ENCODE measurements at regions of chr1 and their contacts with region 1.

Region 1: DNA sequence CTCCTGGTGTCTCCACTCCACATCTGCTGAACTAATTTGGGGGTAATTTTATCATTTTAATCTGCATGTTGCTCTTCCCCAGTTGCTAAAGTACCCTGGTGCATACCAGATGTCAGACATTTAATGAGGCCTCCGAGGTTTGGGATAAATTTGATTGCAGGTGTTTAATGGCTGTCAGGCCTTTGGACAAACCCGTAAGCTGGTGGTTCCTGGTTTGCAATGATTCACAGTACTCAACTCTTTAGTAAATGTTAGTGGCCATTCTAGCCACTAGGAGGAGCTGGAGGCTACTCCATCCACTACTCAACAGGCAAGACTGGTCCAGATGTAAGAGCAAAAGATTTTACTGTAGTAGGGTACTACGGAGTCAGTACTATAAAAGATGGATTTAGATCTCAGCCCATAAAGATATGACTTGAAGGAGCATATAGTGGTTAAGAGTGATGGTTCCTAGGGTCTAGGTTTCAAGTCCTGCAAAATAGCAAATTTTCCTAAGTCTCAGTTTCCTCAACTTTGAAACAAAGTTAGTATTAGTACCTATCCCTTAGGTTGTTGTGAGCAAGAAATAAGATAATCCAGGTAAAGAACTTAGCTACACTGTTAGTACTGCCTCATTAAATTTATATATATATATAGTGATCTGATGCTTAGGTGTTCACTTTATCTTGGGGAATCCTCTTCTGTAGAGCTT is 132.8 kb downstream of the SNX7 start:
- DNase-seq: peak; percentile 75
- H3K4me3 ChIP-seq: no peak overlapping the region
- H3K27ac ChIP-seq: no peak overlapping the region
- H3K4me1 ChIP-seq: no peaks in the 10 kb centered on the region
- H3K27me3 ChIP-seq: no peaks in the 10 kb centered on the region

Region 2: GRCh38 chr1:98371764-98372163 is 422.6 kb before region 1 on chr1:
- in situ Hi-C with region 1: no loop called
- DNase-seq: no peak
- H3K4me3 ChIP-seq: no peak overlapping the region
- H3K27ac ChIP-seq: no peak overlapping the region
- H3K4me1 ChIP-seq: no peaks in the 10 kb centered on the region
- H3K27me3 ChIP-seq: no peaks in the 10 kb centered on the region

Region 3: DNA sequence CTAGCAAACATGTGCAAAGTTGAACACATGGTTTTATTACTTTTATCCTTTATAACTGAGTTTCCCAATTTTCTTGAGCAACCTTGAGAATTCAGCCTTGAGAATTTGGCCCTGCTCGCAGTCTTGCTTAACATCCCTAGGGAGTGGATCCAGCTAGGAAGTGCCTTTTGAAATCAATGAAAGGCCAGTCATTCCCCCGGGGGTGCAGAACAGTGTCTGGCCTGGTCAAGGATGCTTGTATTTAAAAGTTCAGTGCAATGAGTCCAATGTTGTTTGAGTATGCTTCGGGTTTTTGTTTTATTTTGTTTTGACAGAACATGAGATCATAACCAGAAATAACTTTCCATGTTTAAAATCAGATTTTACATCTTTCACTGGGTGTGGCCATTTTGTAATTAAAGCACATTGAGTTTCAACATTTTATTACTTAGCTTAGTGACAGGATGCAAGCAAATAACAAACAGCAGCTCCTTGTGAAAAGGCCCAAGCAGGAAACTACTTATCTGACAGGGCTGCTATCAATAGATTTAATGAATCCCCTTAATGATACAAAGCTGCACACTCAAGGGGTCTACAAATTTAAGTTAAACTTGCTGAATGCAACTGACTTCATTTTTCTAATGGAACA is 868.4 kb after region 1 on chr1:
- in situ Hi-C with region 1: no loop called
- DNase-seq: peak; percentile 97
- H3K4me3 ChIP-seq: no peak overlapping the region
- H3K27ac ChIP-seq: peak overlapping the region; percentile 82
- H3K4me1 ChIP-seq: peaks cover 27% of the 10 kb centered on the region
- H3K27me3 ChIP-seq: no peaks in the 10 kb centered on the region

Region 4: GRCh38 chr1:99707535-99708142 is 913.3 kb after region 1 on chr1:
- in situ Hi-C with region 1: loop called (anchors 25 kb)
- DNase-seq: peak; percentile 69
- H3K4me3 ChIP-seq: no peak overlapping the region
- H3K27ac ChIP-seq: no peak overlapping the region
- H3K4me1 ChIP-seq: no peaks in the 10 kb centered on the region
- H3K27me3 ChIP-seq: no peaks in the 10 kb centered on the region